HEK293T (cell line): ENCODE measurements at regions of chr22 and their contacts with region 1.

Region 1: DNA sequence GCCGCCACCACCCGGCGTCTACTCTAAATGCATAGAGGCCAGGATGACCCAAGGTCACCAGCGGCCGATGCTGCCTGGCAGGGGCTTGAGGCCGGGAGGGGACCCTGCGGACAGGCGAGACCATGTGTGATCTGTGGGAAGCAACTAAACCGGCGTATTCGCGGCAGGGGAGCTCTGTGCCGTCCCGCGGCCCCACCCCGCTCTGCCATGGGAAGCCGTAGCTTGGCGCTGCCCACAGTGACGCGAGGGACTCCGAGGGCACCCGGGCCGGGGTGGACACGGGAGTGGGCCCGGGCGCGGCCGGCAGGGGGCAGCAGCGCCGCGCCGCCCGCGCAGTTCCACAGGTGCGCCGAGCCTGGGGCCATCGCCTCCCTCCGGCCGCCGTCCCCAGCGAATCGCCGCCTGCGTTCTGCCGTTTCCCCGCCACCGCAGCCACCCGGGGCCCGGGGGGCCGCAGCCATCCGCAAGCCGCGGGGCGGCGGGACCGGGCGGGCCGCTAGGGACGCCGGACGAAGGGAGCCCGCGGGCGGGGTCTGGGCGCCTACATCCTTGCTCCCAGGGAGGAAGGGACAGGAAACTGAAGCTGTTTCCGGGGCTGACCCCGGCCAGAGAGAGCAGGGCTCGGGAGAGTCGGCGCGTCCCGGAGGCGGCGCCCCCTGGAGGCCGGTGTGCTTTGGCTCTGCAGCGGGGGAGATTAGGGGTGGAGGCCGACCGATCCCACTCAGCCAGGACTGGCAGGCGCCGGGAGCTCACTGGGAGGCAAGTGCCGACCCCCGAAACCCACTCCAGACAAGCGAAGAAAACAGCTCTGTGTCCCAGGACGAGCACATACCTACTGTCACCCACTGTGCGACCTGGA is 12.5 kb upstream of the HDHD5 start:
- DNase-seq: peak; percentile 95

Region 2: GRCh38 chr22:17095538-17095937 is 76.0 kb before region 1 on chr22:
- CTCF ChIA-PET with region 1: interaction called, 11 read pairs
- POLR2A ChIA-PET with region 1: interaction called, 12 read pairs
- DNase-seq: peak; percentile 65

Region 3: GRCh38 chr22:17191163-17191784 is 19.7 kb after region 1 on chr22:
- CTCF ChIA-PET with region 1: interaction called, 11 read pairs
- POLR2A ChIA-PET with region 1: interaction called, 10 read pairs
- DNase-seq: no peak

Region 4: GRCh38 chr22:17266251-17266971 is 94.9 kb after region 1 on chr22:
- CTCF ChIA-PET with region 1: interaction called, 7 read pairs
- POLR2A ChIA-PET with region 1: interaction called, 13 read pairs
- DNase-seq: peak; percentile 36

Region 5: GRCh38 chr22:17375914-17376614 is 204.5 kb after region 1 on chr22:
- CTCF ChIA-PET with region 1: interaction called, 10 read pairs
- POLR2A ChIA-PET with region 1: no interaction called
- DNase-seq: no peak